Endothelial cell of umbilical vein (primary cell): ENCODE measurements at regions of chr15 and their contacts with region 1.

Region 1: DNA sequence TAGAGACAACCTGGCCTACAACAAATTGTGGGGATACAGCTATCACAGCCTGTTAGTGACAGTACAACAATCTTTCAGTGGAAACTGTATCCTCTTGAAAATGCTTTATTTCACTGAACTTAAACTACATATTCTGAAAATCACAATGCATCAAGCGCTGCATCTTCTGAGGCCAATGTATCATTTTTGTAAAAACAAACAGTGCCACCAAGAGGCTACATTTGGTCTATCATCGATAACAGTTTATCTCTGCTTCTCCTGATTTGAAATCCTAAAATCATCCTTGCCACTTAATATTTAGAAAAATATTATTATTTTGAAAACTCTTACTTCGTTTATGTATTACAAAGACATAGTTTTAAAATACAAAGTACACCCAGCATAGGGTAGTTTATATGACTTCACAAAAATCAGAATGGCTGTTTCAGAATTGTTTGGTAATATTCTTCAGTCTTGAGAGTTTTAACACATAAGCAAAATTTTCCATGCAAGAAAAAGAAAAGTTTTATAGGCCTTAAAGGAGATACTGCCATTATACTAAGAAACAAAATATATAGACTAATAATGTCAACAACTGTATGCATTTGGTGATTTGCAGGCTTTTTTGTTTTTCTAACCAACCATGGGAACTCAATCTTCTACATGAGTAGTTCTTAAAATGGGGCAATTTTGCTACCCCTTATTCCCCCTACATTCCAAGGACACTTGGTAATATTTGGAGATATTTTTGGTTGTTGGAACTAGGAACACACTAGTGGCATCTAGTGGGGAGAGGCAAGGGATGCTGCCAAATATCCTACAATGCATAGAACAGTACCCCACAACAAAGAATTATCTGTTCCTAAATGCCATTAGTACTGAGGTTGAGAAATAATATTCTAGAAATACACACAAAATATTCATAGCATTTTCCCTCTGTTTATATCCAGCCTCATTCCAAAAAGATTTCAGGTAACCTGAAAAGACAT is 42.3 kb downstream of the WDR72 start:
- DNase-seq: peak; percentile 21
- H3K4me3 ChIP-seq: no peak overlapping the region
- H3K27ac ChIP-seq: no peak overlapping the region
- H3K4me1 ChIP-seq: no peaks in the 10 kb centered on the region
- H3K27me3 ChIP-seq: no peaks in the 10 kb centered on the region
- CTCF ChIP-seq: peak; percentile 8 to 17
- POLR2A ChIP-seq: no peak

Region 2: GRCh38 chr15:53197426-53197839 is 519.8 kb before region 1 on chr15:
- CTCF ChIA-PET with region 1: no interaction called
- POLR2A ChIA-PET with region 1: no interaction called
- dilution Hi-C with region 1: no loop called
- intact Hi-C with region 1: loop called (anchors 5 kb)
- DNase-seq: peak; percentile 35
- H3K4me3 ChIP-seq: no peak overlapping the region
- H3K27ac ChIP-seq: no peak overlapping the region
- H3K4me1 ChIP-seq: no peaks in the 10 kb centered on the region
- H3K27me3 ChIP-seq: no peaks in the 10 kb centered on the region
- CTCF ChIP-seq: peak; percentile 80 to 94
- POLR2A ChIP-seq: no peak

Region 3: GRCh38 chr15:53378096-53378800 is 338.9 kb before region 1 on chr15:
- CTCF ChIA-PET with region 1: no interaction called
- POLR2A ChIA-PET with region 1: no interaction called
- dilution Hi-C with region 1: no loop called
- intact Hi-C with region 1: no loop called
- DNase-seq: no peak
- H3K4me3 ChIP-seq: no peak overlapping the region
- H3K27ac ChIP-seq: no peak overlapping the region
- H3K4me1 ChIP-seq: no peaks in the 10 kb centered on the region
- H3K27me3 ChIP-seq: no peaks in the 10 kb centered on the region
- CTCF ChIP-seq: no peak
- POLR2A ChIP-seq: no peak

Region 4: GRCh38 chr15:53644681-53645080 is 72.5 kb before region 1 on chr15:
- CTCF ChIA-PET with region 1: no interaction called
- POLR2A ChIA-PET with region 1: no interaction called
- dilution Hi-C with region 1: no loop called
- intact Hi-C with region 1: no loop called
- DNase-seq: no peak
- H3K4me3 ChIP-seq: no peak overlapping the region
- H3K27ac ChIP-seq: no peak overlapping the region
- H3K4me1 ChIP-seq: no peaks in the 10 kb centered on the region
- H3K27me3 ChIP-seq: peaks cover 3% of the 10 kb centered on the region in 2 experiments
- CTCF ChIP-seq: no peak
- POLR2A ChIP-seq: no peak

Region 5: GRCh38 chr15:53693729-53694475 is 23.3 kb before region 1 on chr15:
- CTCF ChIA-PET with region 1: no interaction called
- POLR2A ChIA-PET with region 1: no interaction called
- dilution Hi-C with region 1: no loop called
- intact Hi-C with region 1: no loop called
- DNase-seq: no peak
- H3K4me3 ChIP-seq: no peak overlapping the region
- H3K27ac ChIP-seq: no peak overlapping the region
- H3K4me1 ChIP-seq: no peaks in the 10 kb centered on the region
- H3K27me3 ChIP-seq: no peaks in the 10 kb centered on the region
- CTCF ChIP-seq: no peak
- POLR2A ChIP-seq: no peak